Activated T-helper 1 cell treated with anti-CD3 and anti-CD28 coated beads, Interleukin-12 subunit alpha, Interleukin-12 subunit beta, Interleukin-2, Interleukin-4 antibody, amounts not matched to agents 30 ng/mL and 10 ng/mL and 1 ng/mL, durations not matched to agents 14 hours and 24 hours and 36 hours (primary cell): ENCODE measurements at regions of chr5 and their contacts with region 1.

Region 1: GRCh38 chr5:119743927-119744326 is 114.6 kb downstream of the FAM170A start:
- DNase-seq: no peak
- H3K4me3 Mint-ChIP-seq: no peak overlapping the region
- H3K27ac Mint-ChIP-seq: no peak overlapping the region
- H3K4me1 Mint-ChIP-seq: no peaks in the 10 kb centered on the region
- H3K27me3 Mint-ChIP-seq: no peaks in the 10 kb centered on the region

Region 2: GRCh38 chr5:118791926-118792734 is 951.8 kb before region 1 on chr5:
- intact Hi-C with region 1: loop called (anchors 10 kb)
- DNase-seq: no peak
- H3K4me3 Mint-ChIP-seq: no peak overlapping the region
- H3K27ac Mint-ChIP-seq: no peak overlapping the region
- H3K4me1 Mint-ChIP-seq: no peaks in the 10 kb centered on the region
- H3K27me3 Mint-ChIP-seq: peaks cover 2% of the 10 kb centered on the region